Activated CD4-positive, alpha-beta memory T cell treated with anti-CD3 and anti-CD28 coated beads, Interleukin-2, amount 10 ng/mL, durations not matched to agents 7 days and 5 days (primary cell): ENCODE measurements at regions of chr2 and their contacts with region 1.

Region 1: DNA sequence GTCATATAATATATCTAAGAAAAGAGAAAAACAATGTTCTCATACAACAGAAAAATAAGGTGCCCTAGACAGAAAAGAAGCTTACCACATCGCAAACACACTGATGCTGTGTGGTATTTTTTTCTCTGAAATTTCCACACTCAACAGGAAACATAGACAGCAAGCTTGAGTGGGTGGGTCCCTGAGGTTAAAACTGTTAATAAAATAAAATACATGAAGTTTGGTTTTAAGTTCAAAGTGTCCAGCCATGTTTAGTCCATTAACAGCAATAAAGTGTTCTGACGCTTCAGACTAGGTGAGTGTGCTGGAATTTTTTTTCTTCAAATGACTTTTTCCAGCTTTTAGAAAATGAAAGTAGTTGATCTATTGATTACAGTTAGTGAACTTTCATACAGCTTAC is 83.3 kb upstream of the EPB41L5 start:
- DNase-seq: peak; percentile 46
- H3K4me3 Mint-ChIP-seq: peak overlapping the region; percentile 81
- H3K27ac Mint-ChIP-seq: peak overlapping the region; percentile 92
- H3K4me1 Mint-ChIP-seq: peaks cover 49% of the 10 kb centered on the region
- H3K27me3 Mint-ChIP-seq: no peaks in the 10 kb centered on the region

Region 2: DNA sequence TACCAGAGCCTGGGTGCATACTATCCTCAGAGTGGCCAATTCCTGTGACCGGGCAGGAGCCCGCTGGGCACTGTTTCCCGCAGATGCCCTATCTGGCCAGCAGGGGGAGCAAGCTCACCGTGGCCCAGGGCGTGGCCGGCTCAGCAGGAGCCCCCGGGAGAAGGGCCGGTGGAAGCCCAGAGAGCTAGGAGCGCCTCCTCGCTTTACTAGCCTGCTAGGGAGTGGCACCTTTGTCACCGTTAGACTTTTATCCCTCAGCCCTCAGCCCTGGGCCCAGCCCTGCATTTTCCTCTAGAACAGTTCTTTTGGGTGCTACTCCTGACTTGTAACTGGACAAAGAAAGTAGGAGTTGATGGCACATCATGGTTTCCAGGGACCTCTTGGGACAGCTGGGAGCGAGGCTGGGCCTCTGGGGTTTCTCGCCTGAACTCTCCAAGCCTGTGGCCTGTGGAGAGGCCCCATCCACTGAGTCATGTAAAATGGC is 226.6 kb before region 1 on chr2:
- CTCF ChIA-PET with region 1: interaction called, 3 read pairs
- POLR2A ChIA-PET with region 1: interaction called, 15 read pairs
- DNase-seq: peak; percentile 74
- H3K4me3 Mint-ChIP-seq: no peak overlapping the region
- H3K27ac Mint-ChIP-seq: no peak overlapping the region
- H3K4me1 Mint-ChIP-seq: peaks cover 24% of the 10 kb centered on the region
- H3K27me3 Mint-ChIP-seq: peaks cover 9% of the 10 kb centered on the region

Region 3: DNA sequence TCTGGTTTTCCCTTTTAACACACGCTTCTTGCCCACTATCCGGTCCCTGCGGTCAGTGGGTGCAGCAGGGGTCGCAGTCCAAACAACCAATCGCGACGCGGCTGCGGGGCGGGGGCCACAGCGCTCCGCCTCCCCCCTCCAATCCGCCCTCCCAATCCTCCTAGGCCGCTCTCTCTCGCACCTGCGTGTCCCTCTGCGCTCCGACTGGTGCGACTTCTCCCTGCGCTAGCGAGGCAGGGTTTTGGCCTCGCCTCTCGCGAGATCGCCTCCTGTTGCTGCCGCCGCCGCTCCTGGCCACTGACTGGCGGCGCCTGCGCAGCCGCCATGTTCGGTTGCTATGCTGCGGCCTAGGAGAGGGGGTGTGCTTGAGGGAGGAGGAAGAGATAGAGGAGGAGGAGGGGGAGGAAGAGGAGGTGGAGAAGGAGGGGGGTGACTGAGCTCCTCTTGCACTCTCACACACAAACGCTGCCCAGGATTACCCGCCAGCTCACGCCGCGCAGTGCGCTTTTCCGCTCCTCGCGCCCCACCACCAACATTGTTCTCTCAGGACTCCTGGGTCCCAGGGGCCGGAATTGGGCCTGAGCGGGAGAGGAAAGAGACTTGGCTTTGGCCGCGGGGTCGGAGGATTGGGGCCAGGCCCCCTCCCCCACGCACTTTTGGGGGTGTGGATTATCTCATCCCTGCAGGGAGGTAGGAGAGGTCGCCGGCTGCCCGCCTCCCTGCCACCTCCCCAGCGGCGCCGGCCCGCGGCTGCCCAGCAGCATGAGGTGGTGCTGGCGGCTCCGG is 169.9 kb before region 1 on chr2 and contains the start of gene PTPN4:
- CTCF ChIA-PET with region 1: interaction called, 3 read pairs
- POLR2A ChIA-PET with region 1: interaction called, 35 read pairs
- DNase-seq: peak; percentile 98
- H3K4me3 Mint-ChIP-seq: peak within 1 kb of the TSS; percentile 93
- H3K27ac Mint-ChIP-seq: peak within 1 kb of the TSS; percentile 91
- H3K4me1 Mint-ChIP-seq: peaks cover 40% of the 10 kb centered on the region
- H3K27me3 Mint-ChIP-seq: peaks cover under 1% of the 10 kb centered on the region
- total RNA-seq, gene PTPN4: 78.7 to 84.5 TPM

Region 4: DNA sequence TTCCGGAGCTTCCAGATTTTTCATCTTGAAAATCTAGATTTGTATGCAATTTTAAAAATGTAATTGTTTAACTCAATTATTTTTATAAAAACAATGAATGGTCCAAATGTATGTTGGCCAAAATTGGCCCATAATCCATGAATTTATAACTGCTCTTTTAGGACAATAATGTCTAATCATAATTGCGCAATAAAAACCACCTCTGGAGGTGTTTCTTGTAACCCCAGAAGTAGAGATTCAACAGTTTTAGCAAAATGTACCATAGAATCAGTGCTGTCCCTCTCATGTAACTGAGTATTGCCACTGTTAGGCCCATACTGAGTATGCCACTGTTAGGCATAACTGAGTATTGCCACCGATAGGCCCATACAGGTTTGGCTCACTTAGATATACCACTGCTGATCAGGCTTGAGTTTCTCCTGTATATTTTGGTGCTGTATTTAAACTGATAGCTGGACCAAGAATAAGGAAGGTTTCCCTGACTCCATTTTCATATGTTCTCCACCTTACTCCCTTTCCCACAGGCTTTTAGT is 12.5 kb after region 1 on chr2:
- CTCF ChIA-PET with region 1: interaction called, 3 read pairs
- POLR2A ChIA-PET with region 1: interaction called, 19 read pairs
- DNase-seq: no peak
- H3K4me3 Mint-ChIP-seq: no peak overlapping the region
- H3K27ac Mint-ChIP-seq: no peak overlapping the region
- H3K4me1 Mint-ChIP-seq: peaks cover 17% of the 10 kb centered on the region
- H3K27me3 Mint-ChIP-seq: no peaks in the 10 kb centered on the region